ENCODE measurements at regions of chrX and their contacts with region 1.

Region 1: DNA sequence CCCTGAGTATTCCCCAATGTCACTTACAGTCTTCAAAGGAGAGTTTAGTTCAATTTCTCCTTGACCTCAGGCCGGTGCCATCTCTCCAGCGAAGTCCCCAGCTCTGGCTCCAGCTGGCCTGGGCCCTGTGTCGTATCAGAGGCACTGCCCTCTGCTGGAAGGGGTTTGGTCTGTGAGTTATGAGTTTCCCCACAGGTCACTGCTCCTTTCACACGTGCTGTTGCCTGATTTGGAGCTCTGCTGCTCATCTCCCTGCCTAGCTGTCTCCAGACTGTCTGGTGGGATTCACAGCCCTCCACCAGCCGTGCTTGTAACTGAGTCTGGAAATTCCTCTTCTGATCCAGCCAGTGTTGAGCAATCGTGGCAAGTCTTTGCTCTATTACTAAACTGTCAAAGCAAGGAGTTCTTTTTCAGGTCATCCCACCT is at the start of gene RAP2C:
- DNase-seq: peak; percentile 81 to 83
- H3K4me3 ChIP-seq: peak within 1 kb of the TSS; percentile 84 to 92
- H3K27ac ChIP-seq: peak within 1 kb of the TSS; percentile 96 to 99
- H3K4me1 ChIP-seq: peaks cover 0 to 19% (median 2%) of the 10 kb centered on the region in 4 donors
- H3K27me3 ChIP-seq: no peaks in the 10 kb centered on the region
- CTCF ChIP-seq: peak; percentile 36 to 37

Region 2: GRCh38 chrX:132092439-132093065 is 126.8 kb before region 1 on chrX:
- intact Hi-C with region 1: loop called (anchors 10 kb)
- DNase-seq: peak; percentile 61 to 78
- H3K4me3 ChIP-seq: no peak overlapping the region
- H3K27ac ChIP-seq: no peak overlapping the region
- H3K4me1 ChIP-seq: peaks cover 0 to 4% (median 0%) of the 10 kb centered on the region in 4 donors
- H3K27me3 ChIP-seq: no peaks in the 10 kb centered on the region
- CTCF ChIP-seq: peak; percentile 63 to 78

Region 3: DNA sequence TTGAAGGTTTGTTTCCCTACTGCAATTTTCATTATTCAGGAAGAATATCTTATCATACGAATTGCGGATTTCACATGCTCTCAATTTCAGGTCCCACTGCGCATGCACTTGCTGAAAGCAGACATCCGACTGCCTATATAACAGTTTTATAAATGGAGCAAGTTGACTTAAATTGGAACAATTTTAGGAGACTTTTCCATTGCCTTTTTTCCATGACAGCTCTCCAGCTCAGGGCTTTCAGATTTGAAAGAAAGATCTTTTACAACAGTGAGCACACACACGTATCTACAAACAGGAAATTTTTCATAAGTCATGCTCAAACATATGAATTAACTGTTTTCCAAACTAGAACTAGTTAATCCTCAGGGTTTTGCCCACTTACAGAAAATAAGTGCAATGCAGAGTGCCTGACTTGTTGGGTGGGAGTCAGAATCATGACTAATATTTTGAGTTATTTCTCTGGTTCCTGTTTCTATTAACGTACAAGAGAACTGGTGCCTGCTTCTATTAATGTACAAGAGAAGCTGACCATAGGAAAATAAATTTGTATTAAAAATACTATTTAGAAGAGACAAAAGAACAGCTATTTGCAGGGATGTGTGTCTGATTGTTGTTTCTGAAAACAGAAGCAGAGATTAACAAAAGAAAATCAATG is 1628.1 kb after region 1 on chrX:
- intact Hi-C with region 1: no loop called
- DNase-seq: no peak
- H3K4me3 ChIP-seq: no peak overlapping the region
- H3K27ac ChIP-seq: no peak overlapping the region
- H3K4me1 ChIP-seq: no peaks in the 10 kb centered on the region
- H3K27me3 ChIP-seq: no peaks in the 10 kb centered on the region
- CTCF ChIP-seq: no peak

Measured in tibial artery (tissue), 4 donors.